ENCODE measurements at regions of chr20 and their contacts with region 1.

Region 1: DNA sequence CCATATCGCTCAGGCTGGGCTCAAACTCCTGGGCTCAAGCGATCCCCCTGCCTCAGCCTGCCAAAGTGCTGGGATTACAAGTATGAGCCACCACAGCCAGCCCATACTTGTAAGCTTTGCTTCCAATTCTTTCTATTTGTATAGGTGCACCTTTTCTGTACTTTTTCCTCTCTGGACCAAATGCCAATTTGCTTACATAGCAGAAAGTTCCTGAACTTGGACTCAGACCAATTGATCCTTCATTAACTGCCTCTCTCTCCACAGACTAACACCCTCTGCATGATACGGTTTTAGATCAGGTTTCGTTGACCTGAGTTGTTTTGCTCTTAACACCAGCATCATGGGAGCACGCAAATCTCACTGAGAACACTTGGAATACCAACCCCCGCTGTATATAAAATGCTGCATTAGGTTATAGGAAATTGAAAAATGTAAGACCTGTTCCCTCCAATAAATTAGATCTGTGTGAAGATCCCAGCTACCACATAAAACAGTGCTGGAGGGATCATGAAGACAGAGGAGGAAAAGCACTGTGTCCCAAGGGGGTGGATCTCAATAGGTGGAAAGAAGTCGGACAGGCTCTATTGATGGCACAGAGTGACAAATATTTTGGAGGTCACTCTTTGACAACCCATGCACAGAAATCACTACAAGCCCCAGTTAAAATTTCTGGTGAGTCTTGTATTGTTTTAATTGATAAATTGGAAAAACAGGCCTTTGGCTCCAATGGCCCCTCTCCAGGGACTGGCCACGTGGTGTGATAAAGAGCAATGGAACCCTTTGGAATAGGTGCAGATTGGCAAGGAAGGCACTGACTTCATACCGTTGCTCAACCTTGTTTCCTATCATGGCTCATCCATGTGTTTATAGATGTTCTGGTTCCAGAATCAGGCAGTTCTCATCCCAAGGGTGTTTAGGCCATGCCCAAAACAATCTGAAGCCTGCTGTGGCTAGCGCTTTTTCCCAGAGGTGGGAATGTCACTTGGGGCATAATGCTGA is 51.2 kb downstream of the ISM1 start:
- DNase-seq: peak in 1 of 2 donors; percentile 16
- ATAC-seq: peak in 1 of 2 donors; percentile 44
- H3K4me3 ChIP-seq: no peak overlapping the region
- H3K27ac ChIP-seq: peak overlapping the region in 1 of 4 donors; percentile 3
- H3K4me1 ChIP-seq: peaks cover 4 to 9% of the 10 kb centered on the region in 2 donors
- H3K27me3 ChIP-seq: no peaks in the 10 kb centered on the region
- CTCF ChIP-seq: no peak
- POLR2A ChIP-seq: no peak

Region 2: DNA sequence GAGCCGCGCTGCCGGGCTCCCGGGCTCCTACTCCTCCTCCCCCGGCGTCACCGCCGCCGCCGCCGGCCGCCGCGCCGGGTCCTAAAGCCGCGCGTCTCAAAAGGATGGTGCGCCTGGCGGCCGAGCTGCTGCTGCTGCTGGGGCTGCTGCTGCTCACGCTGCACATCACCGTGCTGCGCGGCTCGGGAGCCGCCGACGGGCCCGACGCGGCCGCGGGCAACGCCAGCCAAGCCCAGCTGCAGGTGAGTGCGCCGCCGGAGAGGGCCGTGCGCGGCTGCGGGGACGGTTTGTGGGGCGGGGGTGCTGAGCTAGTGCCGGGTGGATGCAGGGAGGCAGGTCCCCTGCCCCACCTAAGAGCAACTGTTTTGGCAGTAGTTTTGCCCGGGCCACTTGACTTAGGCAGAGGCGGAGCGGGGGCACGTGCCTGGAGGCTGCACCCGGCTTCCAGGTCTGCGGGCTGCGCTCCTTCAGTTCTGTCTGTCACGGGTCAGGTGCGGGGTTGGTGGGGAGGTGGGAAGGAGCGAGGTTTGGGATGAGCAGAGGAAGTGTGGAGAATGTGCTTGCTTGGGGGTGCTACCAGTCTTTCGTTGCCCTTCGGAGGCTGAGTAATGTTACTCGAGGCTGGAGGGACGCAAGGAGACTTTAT is 50.5 kb before region 1 on chr20:
- in situ Hi-C with region 1: no loop called
- intact Hi-C with region 1: loop called (anchors 2 kb)
- DNase-seq: no peak
- ATAC-seq: peak; percentile 37 to 69
- H3K4me3 ChIP-seq: peak overlapping the region; percentile 29 to 48 (median 44)
- H3K27ac ChIP-seq: peak overlapping the region in 2 of 4 donors; percentile 21 to 37
- H3K4me1 ChIP-seq: peaks cover 3 to 14% of the 10 kb centered on the region in 2 donors
- H3K27me3 ChIP-seq: peaks cover 29 to 45% (median 30%) of the 10 kb centered on the region in 3 donors
- CTCF ChIP-seq: no peak
- POLR2A ChIP-seq: no peak

Measured in gastrocnemius medialis (tissue), 4 donors.